ENCODE measurements at regions of chrX and their contacts with region 1.

Region 1: DNA sequence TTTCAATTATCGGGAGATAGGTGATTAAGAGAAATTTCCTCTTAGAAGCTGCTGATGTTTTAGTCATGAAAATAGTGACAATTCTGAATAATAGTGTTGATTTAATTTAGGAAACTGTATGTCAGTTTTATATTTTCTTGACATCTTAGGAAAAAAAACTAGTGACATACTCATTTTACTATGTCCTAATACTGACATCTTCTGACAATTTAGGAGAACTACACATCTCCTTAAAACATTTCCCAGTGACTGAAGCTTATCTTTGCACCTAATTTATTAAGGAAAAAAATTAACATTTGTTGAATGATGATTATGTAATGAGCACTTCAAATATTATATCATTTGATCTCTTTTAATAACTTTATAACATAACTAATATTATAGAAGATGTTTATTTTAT is 42.0 kb upstream of the RBMXL3 start:
- DNase-seq: no peak
- H3K4me3 ChIP-seq: no peak overlapping the region
- H3K27ac ChIP-seq: no peak overlapping the region
- H3K4me1 ChIP-seq: no peaks in the 10 kb centered on the region
- H3K27me3 ChIP-seq: no peaks in the 10 kb centered on the region
- CTCF ChIP-seq: peak; percentile 6 to 54 (median 53)

Region 2: DNA sequence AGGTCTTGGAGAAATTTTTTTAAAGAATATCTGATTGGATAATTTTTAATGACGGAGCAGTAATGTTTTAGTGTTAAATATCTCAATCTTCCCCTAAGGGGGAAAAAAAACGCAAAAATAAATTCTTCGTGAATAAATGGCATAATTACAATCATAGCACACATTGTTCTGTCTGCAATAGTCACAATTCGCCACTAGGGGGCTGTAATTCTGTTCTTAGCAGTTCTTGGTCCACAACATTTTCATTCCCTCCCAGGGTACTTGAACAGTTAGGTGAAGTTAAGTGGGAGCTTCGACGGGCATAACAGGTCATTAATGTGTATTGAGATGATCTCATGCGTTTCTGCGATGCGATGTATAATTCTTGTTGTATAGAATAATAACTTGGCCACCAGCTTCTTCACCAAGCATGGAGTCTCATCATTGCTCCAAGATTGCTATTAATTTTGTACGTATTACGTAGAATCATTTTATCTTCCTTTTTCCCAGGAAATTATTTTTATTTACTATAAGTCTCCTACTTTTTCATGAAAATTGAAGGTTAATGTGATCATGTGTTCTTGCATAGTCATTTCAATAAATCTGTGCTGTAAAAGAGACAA is 536.1 kb before region 1 on chrX:
- intact Hi-C with region 1: loop called (anchors 5 kb)
- DNase-seq: no peak
- H3K4me3 ChIP-seq: no peak overlapping the region
- H3K27ac ChIP-seq: no peak overlapping the region
- H3K4me1 ChIP-seq: no peaks in the 10 kb centered on the region
- H3K27me3 ChIP-seq: no peaks in the 10 kb centered on the region
- CTCF ChIP-seq: peak in 2 of 3 experiments; percentile 75 to 91

Region 3: GRCh38 chrX:114635986-114636385 is 511.2 kb before region 1 on chrX:
- intact Hi-C with region 1: no loop called
- DNase-seq: no peak
- H3K4me3 ChIP-seq: no peak overlapping the region
- H3K27ac ChIP-seq: no peak overlapping the region
- H3K4me1 ChIP-seq: no peaks in the 10 kb centered on the region
- H3K27me3 ChIP-seq: no peaks in the 10 kb centered on the region
- CTCF ChIP-seq: no peak

Region 4: DNA sequence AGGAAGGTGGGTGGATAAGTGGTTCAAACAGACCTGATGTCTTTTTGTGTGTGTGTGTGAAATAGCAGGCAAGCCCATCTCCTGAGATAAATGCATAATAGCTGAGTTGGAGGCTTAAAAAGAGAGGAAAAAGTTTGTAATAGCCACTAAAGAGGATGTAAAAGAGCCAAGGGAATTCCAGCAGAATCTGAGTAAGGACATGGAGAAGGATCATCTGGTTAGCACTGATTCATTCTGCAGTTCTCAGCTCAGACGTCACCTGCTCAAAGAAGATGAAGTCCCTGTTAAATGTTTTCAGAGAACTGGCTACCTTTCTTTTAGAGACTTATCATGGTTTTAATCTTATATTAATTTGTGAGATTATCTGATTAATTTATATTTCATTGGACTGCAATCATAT is 108.8 kb before region 1 on chrX:
- intact Hi-C with region 1: no loop called
- DNase-seq: no peak
- H3K4me3 ChIP-seq: no peak overlapping the region
- H3K27ac ChIP-seq: no peak overlapping the region
- H3K4me1 ChIP-seq: no peaks in the 10 kb centered on the region
- H3K27me3 ChIP-seq: no peaks in the 10 kb centered on the region
- CTCF ChIP-seq: no peak